ENCODE measurements at regions of chr12 and their contacts with region 1.

Region 1: GRCh38 chr12:55738123-55739024 is 4.5 kb upstream of the GDF11 start:
- DNase-seq: peak; percentile 92
- ATAC-seq: peak; percentile 88
- H3K4me3 Mint-ChIP-seq: peak overlapping the region; percentile 72
- H3K27ac Mint-ChIP-seq: peak overlapping the region; percentile 92
- H3K4me1 Mint-ChIP-seq: peaks cover 25% of the 10 kb centered on the region
- H3K27me3 Mint-ChIP-seq: no peaks in the 10 kb centered on the region
- CTCF ChIP-seq: peak; percentile 93

Region 2: GRCh38 chr12:55659486-55660385 is 78.6 kb before region 1 on chr12:
- CTCF ChIA-PET with region 1: interaction called, 34 read pairs
- POLR2A ChIA-PET with region 1: no interaction called
- intact Hi-C with region 1: no loop called
- DNase-seq: peak; percentile 47
- ATAC-seq: no peak
- H3K4me3 Mint-ChIP-seq: no peak overlapping the region
- H3K27ac Mint-ChIP-seq: no peak overlapping the region
- H3K4me1 Mint-ChIP-seq: no peaks in the 10 kb centered on the region
- H3K27me3 Mint-ChIP-seq: peaks cover 1% of the 10 kb centered on the region
- CTCF ChIP-seq: peak; percentile 34

Region 3: DNA sequence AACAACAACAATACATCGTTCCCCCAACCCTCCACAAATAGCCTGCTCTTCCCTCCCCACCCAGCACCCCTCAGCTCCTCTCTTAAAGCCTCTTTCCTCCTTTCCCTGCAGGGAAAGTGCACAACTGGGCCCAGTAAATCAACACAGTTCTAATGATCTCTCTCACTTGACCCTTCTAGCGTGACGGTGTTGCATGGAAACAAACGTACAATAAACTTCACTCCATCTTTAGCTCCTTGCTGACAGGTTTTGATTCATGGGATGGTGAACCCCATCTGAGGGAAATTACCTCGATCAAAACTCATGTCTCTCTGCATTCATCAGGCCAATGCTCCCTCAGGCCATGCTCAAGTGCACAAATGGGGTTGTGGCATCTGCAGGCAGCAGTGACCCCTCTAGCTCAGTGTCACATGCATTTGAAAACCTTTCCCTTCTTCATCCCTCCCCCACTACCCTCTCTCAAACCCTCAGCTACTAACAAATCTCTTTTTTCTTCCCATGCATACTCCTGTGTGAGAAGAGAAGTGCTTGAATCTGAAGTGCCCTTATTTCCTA is 27.4 kb after region 1 on chr12:
- CTCF ChIA-PET with region 1: interaction called, 25 read pairs
- POLR2A ChIA-PET with region 1: interaction called, 3 read pairs
- intact Hi-C with region 1: no loop called
- DNase-seq: no peak
- ATAC-seq: no peak
- H3K4me3 Mint-ChIP-seq: no peak overlapping the region
- H3K27ac Mint-ChIP-seq: peak overlapping the region; percentile 50
- H3K4me1 Mint-ChIP-seq: peaks cover 10% of the 10 kb centered on the region
- H3K27me3 Mint-ChIP-seq: no peaks in the 10 kb centered on the region
- CTCF ChIP-seq: no peak

Region 4: DNA sequence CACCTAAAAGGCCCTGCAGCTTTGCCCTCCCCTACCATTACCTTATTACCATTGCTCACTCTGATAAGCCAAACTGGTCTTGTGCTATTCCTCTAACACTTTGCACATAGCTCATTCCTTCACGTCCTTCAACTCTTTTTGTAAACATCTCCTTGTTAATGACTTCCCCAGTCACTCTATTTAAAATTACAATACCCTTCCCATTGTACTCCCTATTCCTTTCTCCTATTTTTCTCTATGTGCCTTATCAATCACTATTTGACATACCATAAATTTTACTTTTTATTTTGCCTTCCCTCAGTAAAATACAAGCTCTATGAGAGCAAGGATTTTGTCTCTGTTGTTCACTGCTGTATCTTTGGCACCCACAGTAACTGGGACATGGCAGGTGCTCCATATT is 73.7 kb after region 1 on chr12:
- CTCF ChIA-PET with region 1: interaction called, 30 read pairs
- POLR2A ChIA-PET with region 1: no interaction called
- intact Hi-C with region 1: loop called (anchors 5 kb)
- DNase-seq: no peak
- ATAC-seq: no peak
- H3K4me3 Mint-ChIP-seq: no peak overlapping the region
- H3K27ac Mint-ChIP-seq: no peak overlapping the region
- H3K4me1 Mint-ChIP-seq: peaks cover 38% of the 10 kb centered on the region
- H3K27me3 Mint-ChIP-seq: no peaks in the 10 kb centered on the region
- CTCF ChIP-seq: no peak

Region 5: DNA sequence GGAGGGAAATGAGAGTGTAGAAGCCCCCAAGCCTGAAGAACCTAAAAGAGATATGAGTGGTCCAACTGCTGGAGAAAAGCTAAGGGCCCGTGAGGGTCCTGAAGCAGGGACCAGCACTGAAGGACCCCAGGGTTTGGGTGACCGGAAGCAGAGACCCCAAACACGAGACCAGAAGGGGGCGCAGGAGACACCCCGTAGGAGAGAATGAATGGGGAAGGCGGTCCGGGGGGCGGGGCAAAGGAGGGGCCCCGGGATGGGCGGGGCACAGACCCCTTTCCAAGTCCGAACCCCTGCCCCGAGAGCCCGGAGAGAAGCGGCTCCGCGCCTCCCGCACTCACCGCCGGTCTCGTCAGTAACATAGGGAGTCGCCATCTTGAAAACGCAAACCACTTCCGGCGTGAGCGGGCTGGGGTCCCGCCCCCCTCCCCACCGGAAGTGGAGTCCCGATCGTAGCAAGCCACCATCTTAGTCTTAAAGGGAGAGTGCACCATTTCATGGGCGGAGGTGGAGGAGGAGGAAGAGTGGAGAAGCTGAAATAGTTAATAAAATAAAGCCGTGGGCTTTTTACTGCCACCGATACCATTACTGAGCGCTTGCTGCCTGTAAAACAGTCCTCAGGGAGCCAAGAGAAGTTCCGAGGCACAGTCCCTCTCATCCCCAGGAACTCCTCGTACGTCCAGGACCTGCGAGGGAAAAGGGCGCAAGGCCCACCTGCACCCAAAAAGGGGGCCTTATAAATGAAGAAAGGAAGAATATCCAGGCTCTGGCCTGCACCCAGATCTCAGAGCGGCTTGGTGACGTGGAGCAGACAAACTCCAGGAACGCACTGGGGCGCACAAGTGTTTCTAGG is 188.6 kb after region 1 on chr12:
- CTCF ChIA-PET with region 1: interaction called, 23 read pairs
- POLR2A ChIA-PET with region 1: interaction called, 13 read pairs
- intact Hi-C with region 1: loop called (anchors 5 kb)
- DNase-seq: peak; percentile 98
- ATAC-seq: peak; percentile 58
- H3K4me3 Mint-ChIP-seq: peak overlapping the region; percentile 99
- H3K27ac Mint-ChIP-seq: peak overlapping the region; percentile 99
- H3K4me1 Mint-ChIP-seq: peaks cover 42% of the 10 kb centered on the region
- H3K27me3 Mint-ChIP-seq: no peaks in the 10 kb centered on the region
- CTCF ChIP-seq: peak; percentile 86

Region 6: GRCh38 chr12:55973598-55974307 is 235.4 kb after region 1 on chr12 and contains the start of gene RAB5B:
- CTCF ChIA-PET with region 1: interaction called, 10 read pairs
- POLR2A ChIA-PET with region 1: no interaction called
- intact Hi-C with region 1: loop called (anchors 10 kb)
- DNase-seq: peak; percentile 99
- ATAC-seq: peak; percentile 93
- H3K4me3 Mint-ChIP-seq: no peak within 1 kb of the TSS
- H3K27ac Mint-ChIP-seq: no peak within 1 kb of the TSS
- H3K4me1 Mint-ChIP-seq: peaks cover 24% of the 10 kb centered on the region
- H3K27me3 Mint-ChIP-seq: no peaks in the 10 kb centered on the region
- CTCF ChIP-seq: no peak
- total RNA-seq, gene RAB5B: 26.0 to 32.4 TPM

Region 7: DNA sequence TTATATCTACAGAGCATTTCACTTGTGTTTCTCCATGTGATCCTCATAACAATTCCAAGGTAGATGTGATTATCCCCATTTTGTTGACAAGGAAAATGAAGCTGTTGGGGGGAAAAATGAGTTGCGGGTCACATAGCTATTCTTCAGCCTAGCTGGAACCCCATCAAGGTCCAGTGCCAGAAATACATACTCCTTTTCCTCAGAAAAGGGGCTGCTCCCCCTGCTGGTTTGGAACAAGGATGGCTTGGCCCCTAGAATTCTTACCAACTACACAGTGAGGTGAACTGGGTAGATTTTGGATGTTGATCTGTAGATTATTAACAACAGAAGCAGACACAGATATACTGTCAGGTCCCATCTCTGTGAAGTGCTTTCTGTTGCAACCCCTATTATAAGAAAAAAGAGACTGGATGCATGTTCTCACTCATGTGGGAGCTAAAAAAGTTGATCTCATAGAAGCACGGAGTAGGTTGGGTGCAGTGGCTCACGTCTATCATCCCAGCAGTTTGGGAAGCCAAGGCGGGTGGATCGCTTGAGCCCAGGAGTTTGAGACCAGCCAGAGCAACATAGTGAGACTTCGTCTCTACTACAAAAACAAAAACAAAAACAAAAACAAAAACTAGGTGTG is 291.4 kb after region 1 on chr12:
- CTCF ChIA-PET with region 1: interaction called, 13 read pairs
- POLR2A ChIA-PET with region 1: no interaction called
- intact Hi-C with region 1: no loop called
- DNase-seq: peak; percentile 51
- ATAC-seq: peak; percentile 34
- H3K4me3 Mint-ChIP-seq: no peak overlapping the region
- H3K27ac Mint-ChIP-seq: peak overlapping the region; percentile 80
- H3K4me1 Mint-ChIP-seq: peaks cover 47% of the 10 kb centered on the region
- H3K27me3 Mint-ChIP-seq: no peaks in the 10 kb centered on the region
- CTCF ChIP-seq: peak; percentile 69